ENCODE measurements at regions of chr6 and their contacts with region 1.

Region 1: GRCh38 chr6:129893640-129894039 is 32.5 kb upstream of the TMEM244 start:
- DNase-seq: no peak
- H3K4me3 ChIP-seq: no peak overlapping the region
- H3K27ac ChIP-seq: no peak overlapping the region
- H3K4me1 ChIP-seq: no peaks in the 10 kb centered on the region
- H3K27me3 ChIP-seq: no peaks in the 10 kb centered on the region
- CTCF ChIP-seq: no peak

Region 2: DNA sequence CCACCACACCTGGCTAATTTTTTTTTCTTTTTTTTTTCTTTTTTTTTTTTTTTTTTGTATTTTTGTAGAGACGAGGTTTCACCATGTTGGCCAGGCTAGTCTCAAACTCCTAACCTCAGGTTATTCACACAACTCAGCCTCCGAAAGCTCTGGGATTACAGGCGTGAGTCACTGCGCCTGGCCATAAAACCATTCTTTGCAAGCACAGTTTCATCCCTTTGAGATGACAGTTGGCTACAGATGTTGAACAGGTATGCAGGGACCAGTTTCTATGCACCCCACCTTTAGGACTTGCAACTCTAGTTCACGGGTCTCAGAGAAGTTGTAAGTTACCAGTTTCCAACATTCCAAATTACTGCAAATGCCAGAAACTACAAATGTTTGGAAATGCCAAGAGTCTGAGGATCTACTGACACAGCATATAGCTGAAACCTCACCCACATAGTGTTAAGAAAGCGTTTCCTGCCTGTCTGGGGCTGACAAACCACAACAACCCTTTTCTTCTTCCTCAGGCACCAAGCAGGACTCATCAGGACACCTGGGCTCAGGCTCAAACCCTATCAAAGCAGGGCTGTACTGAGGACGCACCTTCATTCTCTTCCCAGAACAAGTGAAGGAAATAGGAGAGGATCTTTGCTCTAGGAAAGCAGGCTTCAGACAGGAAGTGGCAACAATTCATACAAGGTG is 206.6 kb before region 1 on chr6:
- intact Hi-C with region 1: no loop called
- DNase-seq: no peak
- H3K4me3 ChIP-seq: no peak overlapping the region
- H3K27ac ChIP-seq: no peak overlapping the region
- H3K4me1 ChIP-seq: peaks cover 8% of the 10 kb centered on the region
- H3K27me3 ChIP-seq: no peaks in the 10 kb centered on the region
- CTCF ChIP-seq: no peak

Region 3: GRCh38 chr6:129936329-129937165 is 42.9 kb after region 1 on chr6:
- intact Hi-C with region 1: loop called (anchors 5 kb)
- DNase-seq: peak; percentile 67
- H3K4me3 ChIP-seq: no peak overlapping the region
- H3K27ac ChIP-seq: no peak overlapping the region
- H3K4me1 ChIP-seq: no peaks in the 10 kb centered on the region
- H3K27me3 ChIP-seq: no peaks in the 10 kb centered on the region
- CTCF ChIP-seq: peak; percentile 44

Region 4: GRCh38 chr6:130447374-130447773 is 553.7 kb after region 1 on chr6:
- intact Hi-C with region 1: no loop called
- DNase-seq: no peak
- H3K4me3 ChIP-seq: no peak overlapping the region
- H3K27ac ChIP-seq: no peak overlapping the region
- H3K4me1 ChIP-seq: no peaks in the 10 kb centered on the region
- H3K27me3 ChIP-seq: no peaks in the 10 kb centered on the region
- CTCF ChIP-seq: no peak